Caco-2 (cell line): ENCODE measurements at regions of chr3 and their contacts with region 1.

Region 1: GRCh38 chr3:30779686-30780287 is 114.7 kb downstream of the GADL1 start:
- DNase-seq: peak; percentile 42 to 70
- H3K4me3 ChIP-seq: no peak overlapping the region
- H3K4me3 Mint-ChIP-seq: no peak overlapping the region
- H3K27ac Mint-ChIP-seq: no peak overlapping the region
- H3K4me1 ChIP-seq: no peaks in the 10 kb centered on the region
- H3K4me1 Mint-ChIP-seq: peaks cover 11% of the 10 kb centered on the region
- H3K27me3 ChIP-seq: no peaks in the 10 kb centered on the region
- H3K27me3 Mint-ChIP-seq: no peaks in the 10 kb centered on the region
- CTCF ChIP-seq: peak; percentile 62 to 78

Region 2: GRCh38 chr3:30729512-30729911 is 50.3 kb before region 1 on chr3:
- CTCF ChIA-PET with region 1: no interaction called
- POLR2A ChIA-PET with region 1: no interaction called
- intact Hi-C with region 1: no loop called
- DNase-seq: no peak
- H3K4me3 ChIP-seq: no peak overlapping the region
- H3K4me3 Mint-ChIP-seq: no peak overlapping the region
- H3K27ac Mint-ChIP-seq: no peak overlapping the region
- H3K4me1 ChIP-seq: peaks cover 6% of the 10 kb centered on the region; the same call in 1 of the 2 replicates
- H3K4me1 Mint-ChIP-seq: peaks cover 11% of the 10 kb centered on the region
- H3K27me3 ChIP-seq: no peaks in the 10 kb centered on the region
- H3K27me3 Mint-ChIP-seq: no peaks in the 10 kb centered on the region
- CTCF ChIP-seq: no peak

Region 3: GRCh38 chr3:30751610-30752299 is 28.0 kb before region 1 on chr3:
- CTCF ChIA-PET with region 1: no interaction called
- POLR2A ChIA-PET with region 1: no interaction called
- intact Hi-C with region 1: no loop called
- DNase-seq: peak; percentile 51 to 58
- H3K4me3 ChIP-seq: no peak overlapping the region
- H3K4me3 Mint-ChIP-seq: no peak overlapping the region
- H3K27ac Mint-ChIP-seq: no peak overlapping the region
- H3K4me1 ChIP-seq: peaks cover 17% of the 10 kb centered on the region
- H3K4me1 Mint-ChIP-seq: peaks cover 15% of the 10 kb centered on the region
- H3K27me3 ChIP-seq: no peaks in the 10 kb centered on the region
- H3K27me3 Mint-ChIP-seq: no peaks in the 10 kb centered on the region
- CTCF ChIP-seq: peak; percentile 36 to 43

Region 4: GRCh38 chr3:30914696-30915095 is 134.9 kb after region 1 on chr3:
- CTCF ChIA-PET with region 1: no interaction called
- POLR2A ChIA-PET with region 1: no interaction called
- intact Hi-C with region 1: loop called (anchors 5 kb)
- DNase-seq: no peak
- H3K4me3 ChIP-seq: no peak overlapping the region
- H3K4me3 Mint-ChIP-seq: no peak overlapping the region
- H3K27ac Mint-ChIP-seq: no peak overlapping the region
- H3K4me1 ChIP-seq: no peaks in the 10 kb centered on the region
- H3K4me1 Mint-ChIP-seq: peaks cover 10% of the 10 kb centered on the region
- H3K27me3 ChIP-seq: no peaks in the 10 kb centered on the region
- H3K27me3 Mint-ChIP-seq: no peaks in the 10 kb centered on the region
- CTCF ChIP-seq: no peak